Common myeloid progenitor, CD34-positive (primary cell): ENCODE measurements at regions of chr2 and their contacts with region 1.

Region 1: GRCh38 chr2:42974721-42975717 is 182.6 kb upstream of the HAAO start:
- DNase-seq: peak; percentile 57 to 77 (median 76)
- H3K4me3 ChIP-seq: peak overlapping the region in 4 of 7 experiments; percentile 40 to 65 (median 62)
- H3K27ac ChIP-seq: peak overlapping the region in 1 of 2 experiments; percentile 66
- H3K4me1 ChIP-seq: peaks cover 0 to 93% (median 75%) of the 10 kb centered on the region in 4 experiments
- H3K27me3 ChIP-seq: no peaks in the 10 kb centered on the region

Region 2: GRCh38 chr2:42810121-42810970 is 164.7 kb before region 1 on chr2:
- CTCF ChIA-PET with region 1: no interaction called
- POLR2A ChIA-PET with region 1: no interaction called
- DNase-seq: peak; percentile 95 to 98 (median 97)
- H3K4me3 ChIP-seq: peak overlapping the region; percentile 62 to 91 (median 75)
- H3K27ac ChIP-seq: peak overlapping the region; percentile 90 to 91
- H3K4me1 ChIP-seq: peaks cover 0 to 23% (median 18%) of the 10 kb centered on the region in 4 experiments
- H3K27me3 ChIP-seq: no peaks in the 10 kb centered on the region

Region 3: GRCh38 chr2:42872721-42873120 is 102.3 kb before region 1 on chr2:
- CTCF ChIA-PET with region 1: no interaction called
- POLR2A ChIA-PET with region 1: no interaction called
- DNase-seq: no peak
- H3K4me3 ChIP-seq: no peak overlapping the region
- H3K27ac ChIP-seq: no peak overlapping the region
- H3K4me1 ChIP-seq: peaks cover 8 to 47% (median 18%) of the 10 kb centered on the region in 4 experiments
- H3K27me3 ChIP-seq: no peaks in the 10 kb centered on the region

Region 4: GRCh38 chr2:42917425-42917927 is 57.5 kb before region 1 on chr2:
- CTCF ChIA-PET with region 1: no interaction called
- POLR2A ChIA-PET with region 1: no interaction called
- DNase-seq: no peak
- H3K4me3 ChIP-seq: peak overlapping the region in 1 of 7 experiments; percentile 14
- H3K27ac ChIP-seq: no peak overlapping the region
- H3K4me1 ChIP-seq: peaks cover 2 to 49% (median 19%) of the 10 kb centered on the region in 4 experiments
- H3K27me3 ChIP-seq: no peaks in the 10 kb centered on the region

Region 5: GRCh38 chr2:42928692-42929545 is 46.1 kb before region 1 on chr2:
- CTCF ChIA-PET with region 1: interaction called, 14 read pairs
- POLR2A ChIA-PET with region 1: no interaction called
- DNase-seq: peak; percentile 82 to 93 (median 91)
- H3K4me3 ChIP-seq: no peak overlapping the region
- H3K27ac ChIP-seq: peak overlapping the region; percentile 91 to 93
- H3K4me1 ChIP-seq: peaks cover 20 to 98% (median 97%) of the 10 kb centered on the region in 4 experiments
- H3K27me3 ChIP-seq: no peaks in the 10 kb centered on the region

Region 6: DNA sequence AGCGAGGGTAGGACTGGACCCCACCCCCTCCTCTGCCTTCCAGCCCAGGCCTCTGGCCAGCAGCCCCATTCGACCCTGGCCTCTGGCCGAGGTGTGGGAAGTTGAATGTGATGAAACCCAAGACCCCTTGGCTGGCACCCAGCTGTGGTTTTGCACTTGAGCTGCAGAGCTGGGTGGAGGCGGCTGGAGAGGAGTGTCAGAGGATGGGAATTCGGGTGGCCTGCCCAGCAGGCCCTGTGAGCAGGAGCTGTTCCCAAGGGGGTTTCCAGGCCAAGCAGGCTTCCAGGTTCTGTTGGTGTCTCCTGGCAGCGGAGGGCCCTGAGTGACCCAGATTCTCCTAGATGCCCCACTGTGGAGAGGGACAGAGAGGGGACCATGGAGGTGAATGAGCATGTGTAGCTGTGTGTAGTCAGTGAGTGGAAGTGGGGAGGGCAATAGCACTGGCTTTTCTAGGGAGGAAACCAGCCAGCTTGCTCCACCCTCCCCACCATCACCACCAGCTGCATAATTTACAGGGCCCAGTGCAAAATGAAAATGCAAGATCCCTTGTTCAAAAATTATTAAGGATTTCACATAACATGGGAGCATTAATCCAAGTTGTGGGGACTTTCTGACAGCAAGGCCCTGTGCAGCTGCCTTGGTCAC is 10.5 kb before region 1 on chr2:
- CTCF ChIA-PET with region 1: interaction called, 65 read pairs
- POLR2A ChIA-PET with region 1: interaction called, 14 read pairs
- DNase-seq: peak in 2 of 3 donors; percentile 65 to 69
- H3K4me3 ChIP-seq: peak overlapping the region in 2 of 7 experiments; percentile 35 to 58
- H3K27ac ChIP-seq: peak overlapping the region; percentile 88 to 91
- H3K4me1 ChIP-seq: peaks cover 35 to 99% (median 95%) of the 10 kb centered on the region in 4 experiments
- H3K27me3 ChIP-seq: no peaks in the 10 kb centered on the region

Region 7: DNA sequence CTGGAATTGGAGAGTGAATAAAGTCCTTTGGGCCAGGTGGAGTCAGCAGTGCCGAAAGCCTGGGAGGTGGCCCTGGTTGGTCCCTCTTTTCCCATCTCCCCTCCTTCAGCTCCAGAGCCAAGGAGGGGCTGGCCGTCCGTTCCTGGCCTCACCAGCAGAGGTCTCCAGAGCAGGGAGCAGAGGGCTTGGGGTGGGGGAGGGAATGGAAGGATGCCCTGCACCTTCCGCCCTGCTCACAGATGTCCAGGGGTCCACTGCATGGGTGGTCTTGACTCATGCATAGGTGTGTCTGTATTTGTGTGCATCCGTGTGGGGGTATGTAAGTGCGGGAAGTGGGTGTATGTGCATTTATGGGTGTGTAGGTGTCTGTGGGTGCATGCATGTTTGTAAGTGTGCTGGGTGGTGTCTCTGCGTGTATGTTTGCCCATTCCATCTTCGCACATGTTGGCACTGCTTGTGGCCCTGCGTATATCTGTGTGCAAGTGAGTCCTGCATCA is 49.5 kb after region 1 on chr2:
- CTCF ChIA-PET with region 1: interaction called, 11 read pairs
- POLR2A ChIA-PET with region 1: no interaction called
- DNase-seq: peak; percentile 41 to 63 (median 52)
- H3K4me3 ChIP-seq: no peak overlapping the region
- H3K27ac ChIP-seq: no peak overlapping the region
- H3K4me1 ChIP-seq: peaks cover 2 to 34% (median 29%) of the 10 kb centered on the region in 4 experiments
- H3K27me3 ChIP-seq: no peaks in the 10 kb centered on the region

Region 8: GRCh38 chr2:43086451-43087221 is 111.6 kb after region 1 on chr2:
- CTCF ChIA-PET with region 1: no interaction called
- POLR2A ChIA-PET with region 1: no interaction called
- DNase-seq: no peak
- H3K4me3 ChIP-seq: no peak overlapping the region
- H3K27ac ChIP-seq: no peak overlapping the region
- H3K4me1 ChIP-seq: peaks cover 2 to 47% (median 25%) of the 10 kb centered on the region in 4 experiments
- H3K27me3 ChIP-seq: no peaks in the 10 kb centered on the region

Region 9: GRCh38 chr2:43219383-43220228 is 244.6 kb after region 1 on chr2:
- CTCF ChIA-PET with region 1: interaction called, 79 read pairs
- POLR2A ChIA-PET with region 1: interaction called, 75 read pairs
- DNase-seq: peak; percentile 91 to 95 (median 94)
- H3K4me3 ChIP-seq: peak overlapping the region in 6 of 7 experiments; percentile 89 to 100 (median 98)
- H3K27ac ChIP-seq: peak overlapping the region; percentile 81 to 91
- H3K4me1 ChIP-seq: peaks cover 27 to 61% (median 48%) of the 10 kb centered on the region in 4 experiments
- H3K27me3 ChIP-seq: no peaks in the 10 kb centered on the region

Region 10: DNA sequence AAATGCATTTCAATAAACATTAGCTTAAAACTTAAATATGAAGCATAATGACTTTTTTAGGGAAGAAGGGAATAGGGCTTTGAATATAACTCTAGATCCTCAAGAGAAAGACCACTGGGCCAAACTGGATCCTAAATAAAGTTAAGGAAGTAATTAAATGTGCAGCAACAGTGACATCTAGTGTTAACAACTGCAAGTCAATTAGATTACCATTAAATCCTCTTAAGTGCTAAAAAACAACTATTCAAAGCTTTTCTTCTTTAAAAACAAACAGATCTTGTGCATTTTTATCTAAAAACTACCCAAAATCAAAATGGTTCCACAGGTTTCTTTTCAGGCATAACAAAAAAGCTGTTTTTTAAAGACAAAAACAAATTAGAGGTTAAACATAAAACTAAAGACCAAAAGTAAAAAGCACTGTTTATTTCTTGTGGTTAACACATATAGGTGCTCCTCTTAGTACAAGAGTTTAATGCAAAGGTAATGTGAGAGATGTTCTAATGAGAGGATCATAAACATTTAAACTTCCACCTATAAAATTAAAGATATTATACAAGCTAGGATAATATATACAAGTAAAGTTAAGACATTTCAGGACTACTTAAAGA is 509.4 kb after region 1 on chr2:
- CTCF ChIA-PET with region 1: interaction called, 12 read pairs
- POLR2A ChIA-PET with region 1: no interaction called
- DNase-seq: peak; percentile 89 to 92 (median 91)
- H3K4me3 ChIP-seq: no peak overlapping the region
- H3K27ac ChIP-seq: no peak overlapping the region
- H3K4me1 ChIP-seq: peaks cover 8 to 29% (median 12%) of the 10 kb centered on the region in 4 experiments
- H3K27me3 ChIP-seq: no peaks in the 10 kb centered on the region